Activated CD8-positive, alpha-beta T cell treated with anti-CD3 and anti-CD28 coated beads, Interleukin-2, amount 10 ng/mL, durations not matched to agents 7 days and 5 days (primary cell): ENCODE measurements at regions of chr1 and their contacts with region 1.

Region 1: DNA sequence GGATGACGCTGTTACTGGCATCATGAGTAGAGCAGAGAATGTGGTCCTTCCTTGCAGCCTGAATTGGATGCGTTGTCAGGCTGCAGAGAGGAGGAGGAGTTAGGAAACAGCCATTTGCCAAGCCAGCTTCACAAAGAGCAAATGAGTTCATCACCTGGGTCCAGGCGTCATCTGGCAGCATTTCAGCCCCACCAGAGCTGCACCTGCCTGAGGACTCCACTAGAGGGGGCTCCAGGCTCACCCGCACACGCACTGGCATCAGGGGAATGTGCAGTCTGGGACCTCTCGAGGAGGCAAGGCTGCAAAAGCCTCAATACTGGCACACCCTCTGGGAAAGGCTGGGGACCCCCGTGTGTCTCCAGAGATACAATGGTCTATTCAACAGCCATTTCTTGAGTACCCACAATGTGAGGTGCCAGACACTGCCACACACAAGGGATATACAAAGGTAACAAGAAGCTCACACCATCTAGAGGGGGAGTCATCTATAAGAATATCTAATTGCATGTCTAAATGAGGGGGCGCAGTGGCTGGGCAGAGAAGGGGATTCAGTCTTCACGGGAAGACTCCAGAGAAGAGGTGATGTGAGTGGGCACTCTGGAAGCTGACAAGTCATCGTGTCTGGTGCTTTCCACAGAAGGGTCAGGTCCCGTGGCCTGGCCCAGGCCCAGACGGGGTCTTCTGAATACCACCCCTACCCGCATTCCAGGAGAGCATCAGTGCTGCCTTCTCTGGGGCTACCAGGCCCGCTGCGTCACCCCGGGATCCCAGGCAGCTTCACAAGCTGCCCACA is 53.5 kb upstream of the CNTN2 start:
- DNase-seq: peak; percentile 73
- ATAC-seq: peak; percentile 66
- H3K4me3 Mint-ChIP-seq: no peak overlapping the region
- H3K27ac Mint-ChIP-seq: no peak overlapping the region
- H3K4me1 Mint-ChIP-seq: peaks cover 14% of the 10 kb centered on the region
- H3K27me3 Mint-ChIP-seq: peaks cover 9% of the 10 kb centered on the region

Region 2: GRCh38 chr1:204915861-204916495 is 73.5 kb before region 1 on chr1:
- CTCF ChIA-PET with region 1: no interaction called
- POLR2A ChIA-PET with region 1: no interaction called
- DNase-seq: no peak
- ATAC-seq: no peak
- H3K4me3 Mint-ChIP-seq: no peak overlapping the region
- H3K27ac Mint-ChIP-seq: no peak overlapping the region
- H3K4me1 Mint-ChIP-seq: no peaks in the 10 kb centered on the region
- H3K27me3 Mint-ChIP-seq: peaks cover 10% of the 10 kb centered on the region

Region 3: GRCh38 chr1:204941421-204942338 is 47.8 kb before region 1 on chr1:
- CTCF ChIA-PET with region 1: interaction called, 10 read pairs
- POLR2A ChIA-PET with region 1: no interaction called
- DNase-seq: peak; percentile 67
- ATAC-seq: peak; percentile 58
- H3K4me3 Mint-ChIP-seq: no peak overlapping the region
- H3K27ac Mint-ChIP-seq: no peak overlapping the region
- H3K4me1 Mint-ChIP-seq: peaks cover 6% of the 10 kb centered on the region
- H3K27me3 Mint-ChIP-seq: peaks cover 13% of the 10 kb centered on the region

Region 4: DNA sequence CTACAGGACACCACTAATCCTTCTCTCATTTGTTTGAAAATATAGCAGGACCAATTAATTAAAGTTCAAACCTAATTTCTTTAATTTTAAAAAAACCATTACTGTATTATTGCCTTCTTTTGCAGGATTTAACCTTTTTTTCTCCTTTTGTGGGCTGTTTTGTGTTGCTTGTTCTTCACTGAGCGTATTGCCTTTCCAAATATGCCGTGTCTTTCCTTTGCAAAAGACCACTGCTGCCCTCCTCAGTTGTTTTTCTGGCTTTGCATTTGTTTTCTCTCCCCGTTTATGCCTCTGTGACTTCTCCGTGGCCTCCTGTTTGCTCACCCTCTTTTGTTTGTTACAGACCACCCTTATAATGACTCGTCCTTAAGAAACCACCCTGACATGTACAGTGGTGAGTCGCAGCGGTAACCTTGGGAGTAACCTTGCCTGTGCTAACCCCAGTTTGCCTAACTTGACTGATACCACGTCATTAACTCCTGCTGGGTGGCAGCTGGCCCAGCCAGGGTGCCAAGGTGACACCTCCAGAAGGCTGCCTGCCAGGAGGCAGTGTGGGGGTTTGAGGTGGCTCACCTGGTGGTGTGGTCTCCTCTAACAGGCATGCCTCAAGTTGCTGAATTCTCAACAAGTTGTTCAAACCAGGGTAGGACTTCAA is 27.6 kb before region 1 on chr1:
- CTCF ChIA-PET with region 1: no interaction called
- POLR2A ChIA-PET with region 1: no interaction called
- DNase-seq: no peak
- ATAC-seq: no peak
- H3K4me3 Mint-ChIP-seq: no peak overlapping the region
- H3K27ac Mint-ChIP-seq: no peak overlapping the region
- H3K4me1 Mint-ChIP-seq: no peaks in the 10 kb centered on the region
- H3K27me3 Mint-ChIP-seq: peaks cover 31% of the 10 kb centered on the region

Region 5: GRCh38 chr1:204975570-204976235 is 13.8 kb before region 1 on chr1:
- CTCF ChIA-PET with region 1: interaction called, 15 read pairs
- POLR2A ChIA-PET with region 1: no interaction called
- DNase-seq: peak; percentile 58
- ATAC-seq: peak; percentile 81
- H3K4me3 Mint-ChIP-seq: no peak overlapping the region
- H3K27ac Mint-ChIP-seq: no peak overlapping the region
- H3K4me1 Mint-ChIP-seq: peaks cover 21% of the 10 kb centered on the region
- H3K27me3 Mint-ChIP-seq: peaks cover 11% of the 10 kb centered on the region

Region 6: GRCh38 chr1:205001162-205001561 is 11.7 kb after region 1 on chr1:
- CTCF ChIA-PET with region 1: interaction called, 19 read pairs
- POLR2A ChIA-PET with region 1: no interaction called
- DNase-seq: no peak
- ATAC-seq: no peak
- H3K4me3 Mint-ChIP-seq: no peak overlapping the region
- H3K27ac Mint-ChIP-seq: no peak overlapping the region
- H3K4me1 Mint-ChIP-seq: no peaks in the 10 kb centered on the region
- H3K27me3 Mint-ChIP-seq: peaks cover 4% of the 10 kb centered on the region

Region 7: DNA sequence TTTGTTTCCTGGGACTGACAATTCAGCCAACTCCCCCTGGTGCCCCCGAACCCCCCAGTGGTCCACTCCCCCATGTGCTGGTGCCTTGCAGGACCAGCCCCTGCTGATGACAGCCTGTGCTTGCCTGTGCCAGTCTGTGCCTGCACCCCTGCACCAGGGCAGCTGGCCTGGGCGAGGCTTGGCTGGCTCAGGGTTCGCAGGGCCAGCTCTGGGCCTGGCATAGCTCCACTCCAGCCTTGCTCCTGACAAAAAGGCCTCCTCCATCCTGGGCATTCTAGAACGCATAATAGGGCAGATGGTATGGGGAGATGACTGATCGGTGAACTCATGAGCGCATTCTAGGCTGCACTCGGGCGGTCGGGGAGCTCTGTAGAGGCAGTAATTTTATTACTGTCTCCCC is 58.9 kb after region 1 on chr1:
- CTCF ChIA-PET with region 1: no interaction called
- POLR2A ChIA-PET with region 1: no interaction called
- DNase-seq: no peak
- ATAC-seq: no peak
- H3K4me3 Mint-ChIP-seq: no peak overlapping the region
- H3K27ac Mint-ChIP-seq: no peak overlapping the region
- H3K4me1 Mint-ChIP-seq: no peaks in the 10 kb centered on the region
- H3K27me3 Mint-ChIP-seq: peaks cover 33% of the 10 kb centered on the region

Region 8: GRCh38 chr1:205121660-205122488 is 132.4 kb after region 1 on chr1 and contains the start of gene RBBP5:
- CTCF ChIA-PET with region 1: interaction called, 10 read pairs
- POLR2A ChIA-PET with region 1: no interaction called
- DNase-seq: peak; percentile 96
- ATAC-seq: peak; percentile 98
- H3K4me3 Mint-ChIP-seq: peak within 1 kb of the TSS; percentile 96
- H3K27ac Mint-ChIP-seq: peak within 1 kb of the TSS; percentile 99
- H3K4me1 Mint-ChIP-seq: peaks cover 39% of the 10 kb centered on the region
- H3K27me3 Mint-ChIP-seq: no peaks in the 10 kb centered on the region
- total RNA-seq, gene RBBP5: 20.3 to 22.0 TPM